HepG2 (cell line): ENCODE measurements at regions of chr2 and their contacts with region 1.

Region 1: GRCh38 chr2:67846370-67847070 is 216.3 kb downstream of the C1D start:
- DNase-seq: peak; percentile 94
- ATAC-seq: peak; percentile 93
- H3K4me3 ChIP-seq: peak overlapping the region in 1 of 3 experiments; percentile 0; a peak in 1 of 6 replicates
- H3K27ac ChIP-seq: no peak overlapping the region
- H3K4me1 ChIP-seq: peaks cover 7% of the 10 kb centered on the region
- H3K27me3 ChIP-seq: 0 out of 5 replicates have a peak, but pooled peaks cover 0 to 3% of the 10 kb centered on the region in 2 experiments
- CTCF ChIP-seq: peak; percentile 80
- EP300 ChIP-seq: peak; percentile 53 to 56; a peak in 2 of 4 replicates
- POLR2A ChIP-seq: no peak
- RAD21 ChIP-seq: peak; percentile 40

Region 2: DNA sequence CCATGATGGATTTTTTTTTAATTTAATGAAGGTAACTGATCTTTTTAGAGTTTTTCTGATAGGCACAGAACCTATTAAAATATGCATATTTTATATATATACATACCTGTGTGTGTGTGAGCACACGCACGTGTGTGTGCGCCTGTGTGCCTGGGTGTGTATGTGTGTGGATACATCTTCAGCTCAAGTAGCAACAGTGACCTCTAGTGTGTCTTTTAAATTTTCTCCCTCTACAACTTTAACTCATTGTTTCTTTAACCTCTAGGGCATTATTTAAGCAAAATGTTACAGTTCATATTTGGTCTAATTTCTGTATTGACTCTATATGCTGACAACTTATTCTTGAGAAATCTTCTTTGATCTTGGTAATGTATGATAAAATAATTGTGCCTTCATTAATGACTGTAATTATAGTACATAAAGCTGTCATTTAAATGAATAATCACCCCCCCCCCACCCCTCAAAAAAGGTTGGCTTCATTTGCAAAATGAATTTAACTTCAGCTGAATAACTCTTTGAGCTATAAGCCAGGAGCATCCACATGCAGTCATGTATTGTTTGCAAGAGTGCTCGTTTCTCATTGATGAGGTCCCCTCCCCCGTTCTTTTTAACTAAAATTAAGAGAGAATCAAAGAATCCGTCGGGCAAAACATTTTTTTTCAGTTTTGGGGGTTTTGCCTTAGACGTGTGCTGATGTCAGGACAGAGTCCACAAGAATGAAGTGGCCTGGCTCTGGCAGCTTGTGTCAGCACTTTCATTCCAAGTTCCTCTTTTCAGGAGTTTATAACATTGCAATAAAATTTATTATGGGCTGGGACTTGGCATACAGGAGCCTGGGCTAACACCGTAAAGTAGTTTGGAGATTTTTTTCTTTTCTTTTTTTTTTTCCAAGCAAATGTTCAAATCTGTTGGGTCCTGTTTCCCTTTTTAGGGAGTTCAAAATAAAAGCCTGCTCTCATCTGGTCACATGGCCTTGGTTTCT is 369.4 kb before region 1 on chr2:
- CTCF ChIA-PET with region 1: no interaction called
- POLR2A ChIA-PET with region 1: no interaction called
- in situ Hi-C with region 1: no loop called
- intact Hi-C with region 1: loop called (anchors 5 kb)
- DNase-seq: peak; percentile 32
- ATAC-seq: peak; percentile 80
- H3K4me3 ChIP-seq: no peak overlapping the region
- H3K27ac ChIP-seq: no peak overlapping the region
- H3K4me1 ChIP-seq: no peaks in the 10 kb centered on the region
- H3K27me3 ChIP-seq: no peaks in the 10 kb centered on the region; a peak in 1 of 5 replicates
- CTCF ChIP-seq: peak; percentile 62
- EP300 ChIP-seq: no peak
- POLR2A ChIP-seq: no peak
- RAD21 ChIP-seq: no peak

Region 3: DNA sequence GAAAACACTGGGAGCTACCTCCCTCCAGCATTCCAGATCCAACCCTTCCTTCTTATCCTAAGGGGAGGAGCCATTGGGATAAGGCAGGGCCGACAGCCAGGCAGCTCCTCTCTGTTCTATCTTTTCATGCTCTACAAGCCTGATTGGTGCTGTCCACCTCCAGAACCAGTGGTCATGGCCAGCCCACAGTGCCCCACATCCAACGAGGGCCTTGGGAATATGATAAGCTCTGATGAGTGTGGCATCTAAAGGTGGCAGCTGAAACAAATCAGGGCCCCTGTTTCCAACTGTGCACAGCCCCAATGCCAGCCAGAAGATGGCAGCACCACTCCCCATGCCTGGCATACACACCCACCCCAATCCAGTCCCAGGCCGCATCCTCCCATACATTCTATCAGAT is 113.0 kb before region 1 on chr2:
- CTCF ChIA-PET with region 1: no interaction called
- POLR2A ChIA-PET with region 1: no interaction called
- in situ Hi-C with region 1: no loop called
- intact Hi-C with region 1: loop called (anchors 2 kb)
- DNase-seq: peak; percentile 8
- ATAC-seq: peak; percentile 87
- H3K4me3 ChIP-seq: no peak overlapping the region
- H3K27ac ChIP-seq: no peak overlapping the region
- H3K4me1 ChIP-seq: peaks cover 28% of the 10 kb centered on the region
- H3K27me3 ChIP-seq: no peaks in the 10 kb centered on the region
- CTCF ChIP-seq: peak; percentile 43
- EP300 ChIP-seq: no peak
- POLR2A ChIP-seq: no peak
- RAD21 ChIP-seq: no peak

Region 4: GRCh38 chr2:67806816-67807215 is 39.7 kb before region 1 on chr2:
- CTCF ChIA-PET with region 1: no interaction called
- POLR2A ChIA-PET with region 1: no interaction called
- in situ Hi-C with region 1: no loop called
- intact Hi-C with region 1: no loop called
- DNase-seq: no peak
- ATAC-seq: no peak
- H3K4me3 ChIP-seq: no peak overlapping the region
- H3K27ac ChIP-seq: no peak overlapping the region
- H3K4me1 ChIP-seq: no peaks in the 10 kb centered on the region
- H3K27me3 ChIP-seq: no peaks in the 10 kb centered on the region
- CTCF ChIP-seq: no peak
- EP300 ChIP-seq: no peak
- POLR2A ChIP-seq: no peak
- RAD21 ChIP-seq: no peak

Region 5: GRCh38 chr2:67874915-67875314 is 28.4 kb after region 1 on chr2:
- CTCF ChIA-PET with region 1: no interaction called
- POLR2A ChIA-PET with region 1: no interaction called
- in situ Hi-C with region 1: no loop called
- intact Hi-C with region 1: loop called (anchors 1 kb)
- DNase-seq: no peak
- ATAC-seq: no peak
- H3K4me3 ChIP-seq: no peak overlapping the region
- H3K27ac ChIP-seq: no peak overlapping the region
- H3K4me1 ChIP-seq: no peaks in the 10 kb centered on the region
- H3K27me3 ChIP-seq: no peaks in the 10 kb centered on the region
- CTCF ChIP-seq: no peak
- EP300 ChIP-seq: no peak
- POLR2A ChIP-seq: no peak
- RAD21 ChIP-seq: no peak